CD4-positive, alpha-beta T cell (primary cell): ENCODE measurements at regions of chr5 and their contacts with region 1.

Region 1: DNA sequence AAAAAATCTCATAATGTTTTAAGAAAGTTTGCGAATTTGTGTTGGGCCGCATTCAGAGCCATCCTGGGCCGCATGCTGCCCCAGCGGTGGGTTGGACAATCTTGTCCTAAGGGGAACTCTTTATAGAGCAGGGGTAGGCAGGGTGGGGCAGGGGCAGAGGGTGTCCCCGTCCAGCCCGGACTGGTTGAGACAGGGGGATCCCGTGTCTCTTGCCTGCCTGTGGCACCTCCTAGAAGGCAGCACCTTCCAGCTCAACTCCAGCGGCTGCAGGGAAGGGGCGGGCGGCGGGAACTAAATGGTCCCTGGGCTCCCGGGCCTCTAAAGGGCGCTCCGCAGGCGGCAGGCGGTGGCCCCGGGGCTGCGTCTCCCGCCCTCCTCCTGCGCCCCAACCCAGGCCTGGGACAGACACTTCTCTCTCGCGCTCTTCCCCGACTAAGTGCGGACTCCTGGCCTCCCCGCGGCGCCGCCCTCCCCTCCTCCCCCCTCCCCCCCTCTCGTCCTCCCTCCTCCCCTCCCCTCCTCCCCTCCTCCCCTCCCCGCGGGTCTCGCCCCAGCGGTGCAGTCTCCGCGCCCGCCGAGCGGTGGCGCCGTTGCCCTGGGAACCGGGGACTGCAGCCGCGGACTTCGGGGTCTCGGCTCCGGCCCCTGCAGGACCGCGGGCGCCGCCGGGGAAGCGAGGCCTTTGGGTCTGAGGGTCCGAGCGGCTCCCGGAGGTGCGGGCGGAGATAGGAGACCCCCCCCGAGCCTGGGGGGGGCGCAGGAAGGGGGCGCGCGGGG is 132.6 kb downstream of the MRPL36 start:
- DNase-seq: peak; percentile 26 to 64 (median 40)
- ATAC-seq: peak; percentile 70
- H3K4me3 ChIP-seq: no peak overlapping the region
- H3K4me3 Mint-ChIP-seq: peak overlapping the region; percentile 27
- H3K27ac ChIP-seq: no peak overlapping the region
- H3K27ac Mint-ChIP-seq: no peak overlapping the region
- H3K4me1 ChIP-seq: peaks cover 17% of the 10 kb centered on the region
- H3K4me1 Mint-ChIP-seq: peaks cover 18% of the 10 kb centered on the region
- H3K27me3 ChIP-seq: peaks cover 54 to 62% of the 10 kb centered on the region in 2 experiments
- H3K27me3 Mint-ChIP-seq: peaks cover 81% of the 10 kb centered on the region
- CTCF ChIP-seq: no peak

Region 2: GRCh38 chr5:2044041-2044440 is 377.0 kb after region 1 on chr5:
- CTCF ChIA-PET with region 1: no interaction called
- POLR2A ChIA-PET with region 1: no interaction called
- intact Hi-C with region 1: loop called in 1 of 2 experiments (anchors 5 kb)
- DNase-seq: no peak
- ATAC-seq: no peak
- H3K4me3 ChIP-seq: no peak overlapping the region
- H3K4me3 Mint-ChIP-seq: no peak overlapping the region
- H3K27ac ChIP-seq: no peak overlapping the region
- H3K27ac Mint-ChIP-seq: no peak overlapping the region
- H3K4me1 ChIP-seq: no peaks in the 10 kb centered on the region
- H3K4me1 Mint-ChIP-seq: no peaks in the 10 kb centered on the region
- H3K27me3 ChIP-seq: peaks cover 2 to 9% of the 10 kb centered on the region in 2 experiments
- H3K27me3 Mint-ChIP-seq: peaks cover 52% of the 10 kb centered on the region
- CTCF ChIP-seq: no peak